Caco-2 (cell line): ENCODE measurements at regions of chr13 and their contacts with region 1.

Region 1: DNA sequence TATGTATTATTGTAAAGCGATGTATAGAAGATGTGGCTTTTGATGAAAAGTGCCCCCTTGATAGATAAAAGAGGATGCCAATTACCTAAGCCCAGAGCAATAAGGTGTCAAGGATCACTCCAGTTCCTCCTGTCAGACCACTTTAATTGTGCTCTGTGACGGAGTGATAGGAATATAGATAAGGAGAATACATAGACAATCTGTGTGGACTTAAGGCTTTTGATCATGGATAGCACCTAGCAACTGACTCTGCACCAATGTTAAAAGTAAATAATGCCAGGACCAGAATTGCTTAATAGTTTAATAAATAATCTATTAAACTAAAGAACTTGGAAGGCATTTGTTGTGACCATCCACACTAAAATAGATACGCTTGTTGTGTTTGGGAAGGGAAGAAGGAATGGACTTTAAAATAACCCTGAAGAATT is 390.7 kb upstream of the ARGLU1 start:
- DNase-seq: peak; percentile 69 to 82
- H3K4me3 ChIP-seq: no peak overlapping the region
- H3K4me3 Mint-ChIP-seq: peak overlapping the region; percentile 65
- H3K27ac Mint-ChIP-seq: peak overlapping the region; percentile 92
- H3K4me1 ChIP-seq: peaks cover 69% of the 10 kb centered on the region
- H3K4me1 Mint-ChIP-seq: peaks cover 50% of the 10 kb centered on the region
- H3K27me3 ChIP-seq: no peaks in the 10 kb centered on the region
- H3K27me3 Mint-ChIP-seq: no peaks in the 10 kb centered on the region
- CTCF ChIP-seq: no peak

Region 2: DNA sequence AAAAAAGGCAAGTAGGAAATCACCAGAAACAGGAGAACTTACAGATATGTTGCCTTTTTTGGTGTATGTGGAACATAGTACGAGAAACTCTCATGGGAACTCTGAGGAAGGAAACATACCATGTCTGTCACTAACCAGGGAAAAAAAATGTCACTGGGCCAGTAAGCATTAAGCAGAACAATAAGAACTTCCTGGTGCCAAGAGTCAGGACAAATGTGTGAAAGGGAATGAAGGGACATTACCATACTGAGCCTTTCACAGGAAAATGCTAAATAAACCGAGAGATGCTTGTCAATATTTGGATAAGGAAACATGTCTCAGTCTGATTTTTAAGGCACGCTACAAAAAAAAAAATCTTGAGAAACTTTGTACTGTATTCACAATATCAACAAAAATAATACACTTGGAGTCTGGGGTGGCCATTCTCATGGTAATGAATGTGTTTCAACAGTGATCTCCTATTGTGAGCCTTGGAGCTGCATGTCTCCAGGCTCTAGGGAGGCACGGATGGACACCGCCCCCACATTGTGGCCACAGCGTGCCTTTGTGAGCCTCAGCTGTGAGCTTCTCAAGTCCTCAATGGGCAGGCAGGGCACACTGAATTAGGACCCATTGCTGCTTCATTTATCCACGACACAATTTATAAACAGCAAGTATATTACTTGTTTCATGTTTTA is 277.7 kb before region 1 on chr13:
- CTCF ChIA-PET with region 1: no interaction called
- POLR2A ChIA-PET with region 1: no interaction called
- intact Hi-C with region 1: loop called (anchors 1 kb)
- DNase-seq: no peak
- H3K4me3 ChIP-seq: no peak overlapping the region
- H3K4me3 Mint-ChIP-seq: no peak overlapping the region
- H3K27ac Mint-ChIP-seq: no peak overlapping the region
- H3K4me1 ChIP-seq: peaks cover 43% of the 10 kb centered on the region
- H3K4me1 Mint-ChIP-seq: peaks cover 50% of the 10 kb centered on the region
- H3K27me3 ChIP-seq: no peaks in the 10 kb centered on the region
- H3K27me3 Mint-ChIP-seq: no peaks in the 10 kb centered on the region
- CTCF ChIP-seq: no peak

Region 3: GRCh38 chr13:106867249-106867648 is 91.4 kb before region 1 on chr13:
- CTCF ChIA-PET with region 1: no interaction called
- POLR2A ChIA-PET with region 1: no interaction called
- intact Hi-C with region 1: no loop called
- DNase-seq: no peak
- H3K4me3 ChIP-seq: no peak overlapping the region
- H3K4me3 Mint-ChIP-seq: no peak overlapping the region
- H3K27ac Mint-ChIP-seq: no peak overlapping the region
- H3K4me1 ChIP-seq: peaks cover under 1% of the 10 kb centered on the region; the same call in 1 of the 2 replicates
- H3K4me1 Mint-ChIP-seq: peaks cover 7% of the 10 kb centered on the region
- H3K27me3 ChIP-seq: no peaks in the 10 kb centered on the region
- H3K27me3 Mint-ChIP-seq: no peaks in the 10 kb centered on the region
- CTCF ChIP-seq: no peak

Region 4: DNA sequence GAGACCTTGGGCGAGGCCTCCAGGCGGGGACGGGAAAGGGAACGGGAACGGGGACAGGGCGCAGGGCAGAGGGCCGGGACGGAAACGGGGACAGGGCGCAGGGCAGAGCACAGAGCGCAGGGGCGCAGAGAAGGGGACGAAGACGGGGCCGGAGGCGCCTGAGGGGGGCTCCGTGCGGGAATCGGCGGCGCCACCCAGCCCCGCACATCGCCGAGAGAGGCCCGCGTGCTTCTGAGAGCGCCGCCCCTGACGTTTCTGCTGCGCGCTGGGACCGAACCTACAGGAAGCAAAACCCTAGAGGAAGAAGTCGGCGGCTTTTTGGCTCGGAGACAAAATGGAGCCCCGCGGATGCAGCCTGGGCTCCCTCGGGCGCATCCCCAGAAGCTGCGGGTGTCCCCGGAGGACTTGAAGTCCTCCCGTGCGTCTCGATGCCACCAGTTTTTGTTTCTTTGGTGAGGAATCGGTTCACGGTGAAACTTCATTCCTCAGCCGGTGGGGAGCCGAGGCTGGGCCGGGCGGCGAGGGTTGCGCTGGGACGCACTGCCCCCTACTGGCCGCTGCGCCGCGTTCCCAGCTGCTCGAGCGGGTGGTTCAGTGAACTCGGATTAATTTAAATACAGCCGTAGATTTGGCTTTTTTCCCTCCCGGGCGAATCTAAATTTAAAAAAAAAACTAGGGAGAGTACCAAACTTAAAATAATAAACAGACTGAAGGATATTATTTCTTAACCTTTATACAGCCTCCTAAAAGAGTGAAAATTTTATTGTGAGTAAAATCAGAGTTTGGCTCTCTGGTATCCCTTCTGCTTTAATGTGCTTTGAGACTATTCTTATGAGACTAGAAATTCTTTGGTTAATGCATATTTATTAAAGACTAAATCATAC is 40.7 kb before region 1 on chr13:
- CTCF ChIA-PET with region 1: interaction called, 6 read pairs
- POLR2A ChIA-PET with region 1: no interaction called
- intact Hi-C with region 1: loop called (anchors 2 kb)
- DNase-seq: peak; percentile 77 to 91
- H3K4me3 ChIP-seq: peak overlapping the region; percentile 44
- H3K4me3 Mint-ChIP-seq: peak overlapping the region; percentile 74
- H3K27ac Mint-ChIP-seq: peak overlapping the region; percentile 92
- H3K4me1 ChIP-seq: peaks cover 25% of the 10 kb centered on the region
- H3K4me1 Mint-ChIP-seq: peaks cover 34% of the 10 kb centered on the region
- H3K27me3 ChIP-seq: no peaks in the 10 kb centered on the region
- H3K27me3 Mint-ChIP-seq: no peaks in the 10 kb centered on the region
- CTCF ChIP-seq: peak; percentile 96

Region 5: GRCh38 chr13:107006661-107007060 is 48.0 kb after region 1 on chr13:
- CTCF ChIA-PET with region 1: no interaction called
- POLR2A ChIA-PET with region 1: no interaction called
- intact Hi-C with region 1: loop called (anchors 1 kb)
- DNase-seq: no peak
- H3K4me3 ChIP-seq: peak overlapping the region; percentile 1; the same call in 1 of the 2 replicates
- H3K4me3 Mint-ChIP-seq: peak overlapping the region; percentile 62
- H3K27ac Mint-ChIP-seq: peak overlapping the region; percentile 83
- H3K4me1 ChIP-seq: peaks cover 43% of the 10 kb centered on the region
- H3K4me1 Mint-ChIP-seq: peaks cover 43% of the 10 kb centered on the region
- H3K27me3 ChIP-seq: no peaks in the 10 kb centered on the region
- H3K27me3 Mint-ChIP-seq: no peaks in the 10 kb centered on the region
- CTCF ChIP-seq: no peak

Region 6: GRCh38 chr13:107574517-107575210 is 616.0 kb after region 1 on chr13:
- CTCF ChIA-PET with region 1: no interaction called
- POLR2A ChIA-PET with region 1: no interaction called
- intact Hi-C with region 1: loop called (anchors 10 kb)
- DNase-seq: no peak
- H3K4me3 ChIP-seq: no peak overlapping the region
- H3K4me3 Mint-ChIP-seq: no peak overlapping the region
- H3K27ac Mint-ChIP-seq: no peak overlapping the region
- H3K4me1 ChIP-seq: no peaks in the 10 kb centered on the region
- H3K4me1 Mint-ChIP-seq: no peaks in the 10 kb centered on the region
- H3K27me3 ChIP-seq: no peaks in the 10 kb centered on the region
- H3K27me3 Mint-ChIP-seq: peaks cover 13% of the 10 kb centered on the region
- CTCF ChIP-seq: no peak